Mammary epithelial cell (primary cell): ENCODE measurements at regions of chr22 and their contacts with region 1.

Region 1: GRCh38 chr22:27718186-27719032 is 83.1 kb downstream of the MN1 start:
- DNase-seq: peak; percentile 96
- H3K4me3 ChIP-seq: no peak overlapping the region
- H3K27ac ChIP-seq: peak overlapping the region; percentile 84
- H3K4me1 ChIP-seq: peaks cover 36% of the 10 kb centered on the region
- H3K27me3 ChIP-seq: no peaks in the 10 kb centered on the region
- CTCF ChIP-seq: no peak

Region 2: DNA sequence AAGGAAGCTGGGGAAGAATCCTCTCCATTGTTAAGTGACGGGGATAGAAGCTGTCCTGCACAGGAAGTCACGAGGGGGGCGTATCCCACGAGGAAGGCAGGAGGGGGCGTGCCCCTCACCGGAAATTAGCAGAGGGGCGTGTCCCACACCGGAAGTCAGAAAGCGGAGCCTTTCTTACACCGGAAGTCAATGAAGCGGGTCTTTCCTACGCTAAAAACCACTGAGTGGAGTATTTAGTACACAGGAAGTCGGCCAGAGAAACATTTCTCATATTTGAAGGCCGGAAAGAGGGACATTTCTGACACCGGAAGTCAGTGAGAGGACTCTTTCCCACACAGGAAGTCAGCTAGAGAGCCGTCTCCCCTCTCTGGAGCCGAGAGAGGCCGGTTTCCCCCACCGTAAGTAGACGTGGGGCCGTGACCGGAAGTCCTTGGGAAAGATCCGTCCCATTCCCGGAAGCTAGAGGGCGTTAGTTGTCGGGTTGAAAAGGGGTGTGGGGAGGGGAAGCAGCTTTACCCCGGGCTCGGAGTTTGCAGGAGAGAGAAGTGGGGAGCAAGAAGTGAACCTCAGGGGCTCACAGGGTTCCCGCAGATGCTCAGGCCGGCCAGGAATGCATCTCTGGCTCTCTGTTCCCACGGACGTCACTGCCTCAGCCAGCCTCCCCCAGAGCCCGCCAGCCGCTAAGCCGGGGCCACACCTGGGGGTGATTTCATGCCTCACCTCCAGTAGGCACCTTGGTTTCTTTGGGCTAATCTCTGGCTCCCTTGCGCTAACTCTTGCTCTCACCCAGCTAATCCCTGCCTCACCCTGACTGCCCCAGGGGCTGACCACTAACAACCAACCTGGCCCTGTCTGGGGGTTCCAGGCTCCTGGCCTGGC is 1045.6 kb before region 1 on chr22:
- CTCF ChIA-PET with region 1: no interaction called
- dilution Hi-C with region 1: no loop called
- in situ Hi-C with region 1: no loop called
- intact Hi-C with region 1: loop called (anchors 5 kb)
- DNase-seq: peak; percentile 90
- H3K4me3 ChIP-seq: peak overlapping the region; percentile 61 to 71 (median 65)
- H3K27ac ChIP-seq: peak overlapping the region; percentile 98
- H3K4me1 ChIP-seq: peaks cover 35% of the 10 kb centered on the region
- H3K27me3 ChIP-seq: no peaks in the 10 kb centered on the region
- CTCF ChIP-seq: peak; percentile 36 to 63

Region 3: GRCh38 chr22:27420817-27421361 is 297.5 kb before region 1 on chr22:
- CTCF ChIA-PET with region 1: no interaction called
- dilution Hi-C with region 1: no loop called
- in situ Hi-C with region 1: no loop called
- intact Hi-C with region 1: loop called (anchors 5 kb)
- DNase-seq: peak; percentile 82
- H3K4me3 ChIP-seq: no peak overlapping the region
- H3K27ac ChIP-seq: peak overlapping the region; percentile 52
- H3K4me1 ChIP-seq: peaks cover 44% of the 10 kb centered on the region
- H3K27me3 ChIP-seq: no peaks in the 10 kb centered on the region
- CTCF ChIP-seq: no peak

Region 4: GRCh38 chr22:27749597-27750225 is 31.3 kb after region 1 on chr22:
- CTCF ChIA-PET with region 1: no interaction called
- dilution Hi-C with region 1: no loop called
- in situ Hi-C with region 1: no loop called
- intact Hi-C with region 1: loop called (anchors 2 kb)
- DNase-seq: peak; percentile 29
- H3K4me3 ChIP-seq: no peak overlapping the region
- H3K27ac ChIP-seq: no peak overlapping the region
- H3K4me1 ChIP-seq: peaks cover 69% of the 10 kb centered on the region
- H3K27me3 ChIP-seq: no peaks in the 10 kb centered on the region
- CTCF ChIP-seq: no peak